ENCODE measurements at regions of chr22 and their contacts with region 1.

Region 1: DNA sequence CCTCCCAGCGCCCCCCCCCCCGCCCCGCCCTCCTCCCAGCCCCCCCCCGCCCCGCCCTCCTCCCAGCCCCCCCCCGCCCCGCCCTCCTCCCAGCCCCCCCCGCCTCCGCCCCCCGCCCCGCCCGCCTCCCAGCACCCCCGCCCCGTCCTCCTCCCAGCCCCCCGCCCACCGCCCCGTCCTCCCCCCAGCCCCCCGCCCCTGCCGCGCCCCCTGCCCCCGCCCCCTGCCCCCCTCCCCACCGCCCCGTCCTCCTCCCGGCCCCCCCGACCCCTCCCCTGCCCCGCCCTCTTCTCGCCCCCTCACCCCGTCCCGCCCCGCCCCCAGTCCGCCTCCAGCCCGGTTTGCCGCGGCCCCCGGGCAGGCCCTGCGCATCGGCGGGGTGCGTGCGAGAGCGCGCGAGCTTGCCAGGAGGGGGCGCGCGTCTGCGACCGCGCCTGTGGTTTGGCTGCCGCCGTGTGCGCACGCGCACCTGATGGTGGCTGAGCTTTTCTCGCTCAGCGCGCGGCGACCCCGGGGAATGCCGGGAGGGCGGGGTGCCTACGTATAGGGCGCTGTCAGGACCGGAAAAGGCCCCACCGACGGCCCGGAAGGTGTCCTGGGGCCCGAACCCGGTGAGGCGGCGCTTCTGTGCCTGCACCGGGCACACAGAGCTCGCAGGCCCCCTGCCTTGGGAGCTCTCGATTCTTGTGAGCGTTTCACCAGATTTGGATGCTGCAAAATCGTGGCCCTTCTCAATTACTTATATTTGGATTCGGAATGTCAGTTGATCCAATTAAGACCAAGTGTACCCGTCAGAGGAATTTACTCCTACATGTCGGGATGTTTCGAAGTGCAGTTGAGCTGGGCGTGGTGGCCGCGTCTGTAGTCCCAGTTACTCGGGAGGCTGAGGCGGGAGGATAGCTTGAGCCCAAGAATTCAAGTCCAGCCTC is 501 bp upstream of the TTLL12 start:
- DNase-seq: peak; percentile 93 to 98
- ATAC-seq: peak; percentile 93 to 96 (median 95)
- H3K4me3 ChIP-seq: peak overlapping the region; percentile 27 to 88 (median 61)
- H3K27ac ChIP-seq: peak overlapping the region; percentile 70 to 97 (median 88)
- H3K4me1 ChIP-seq: peaks cover 2 to 34% (median 18%) of the 10 kb centered on the region in 9 donors
- H3K27me3 ChIP-seq: no peaks in the 10 kb centered on the region
- CTCF ChIP-seq: peak; percentile 71 to 91 (median 76)

Region 2: DNA sequence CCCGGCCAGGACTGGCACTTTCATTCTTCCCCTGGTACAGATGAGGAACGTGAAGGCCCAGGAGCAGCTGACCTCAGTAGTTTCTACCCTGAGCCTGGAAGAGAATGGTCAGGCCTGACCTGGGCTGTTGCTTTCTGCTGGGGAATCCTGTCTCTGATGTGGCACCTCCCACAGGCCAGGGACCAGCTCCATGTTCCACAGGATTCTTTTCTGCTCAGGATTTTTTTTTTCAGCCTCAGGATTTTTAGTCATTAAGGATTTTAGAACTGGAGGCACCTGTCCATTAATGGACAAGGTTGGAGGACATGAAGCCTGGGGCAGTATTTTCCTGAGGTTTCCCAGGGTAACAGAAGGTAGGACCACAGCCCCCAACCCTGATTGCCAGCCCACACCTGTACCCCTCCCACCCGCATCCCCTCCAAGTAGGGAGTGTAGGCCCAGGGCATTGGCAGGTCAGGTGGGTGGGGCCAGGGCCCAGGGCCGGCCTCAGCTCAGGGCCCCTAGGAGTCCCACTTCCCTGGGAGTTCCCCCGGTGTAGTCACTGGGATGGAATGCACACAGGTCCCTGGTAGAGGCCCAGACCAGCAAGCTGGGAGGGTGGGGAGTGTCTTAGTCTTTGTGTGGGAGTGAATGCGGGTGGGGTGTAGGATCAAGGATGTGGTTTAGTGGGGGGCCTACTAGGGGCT is 60.8 kb before region 1 on chr22:
- intact Hi-C with region 1: no loop called
- DNase-seq: no peak
- ATAC-seq: peak in 2 of 8 donors; percentile 20 to 23
- H3K4me3 ChIP-seq: no peak overlapping the region
- H3K27ac ChIP-seq: no peak overlapping the region
- H3K4me1 ChIP-seq: peaks cover 0 to 40% (median 8%) of the 10 kb centered on the region in 9 donors
- H3K27me3 ChIP-seq: no peaks in the 10 kb centered on the region
- CTCF ChIP-seq: no peak

Region 3: GRCh38 chr22:43222262-43222661 is 34.8 kb after region 1 on chr22:
- intact Hi-C with region 1: loop called in 1 of 10 experiments (anchors 5 kb)
- DNase-seq: peak; percentile 60 to 76
- ATAC-seq: peak; percentile 83 to 94 (median 91)
- H3K4me3 ChIP-seq: peak overlapping the region in 1 of 10 donors; percentile 33
- H3K27ac ChIP-seq: peak overlapping the region in 5 of 10 donors; percentile 6 to 73 (median 35)
- H3K4me1 ChIP-seq: peaks cover 6 to 21% (median 18%) of the 10 kb centered on the region in 9 donors
- H3K27me3 ChIP-seq: peaks cover 0 to 6% (median 0%) of the 10 kb centered on the region in 7 donors
- CTCF ChIP-seq: no peak

Region 4: GRCh38 chr22:43232445-43232844 is 45.0 kb after region 1 on chr22:
- intact Hi-C with region 1: no loop called
- DNase-seq: no peak
- ATAC-seq: no peak
- H3K4me3 ChIP-seq: no peak overlapping the region
- H3K27ac ChIP-seq: no peak overlapping the region
- H3K4me1 ChIP-seq: peaks cover 0 to 20% (median 8%) of the 10 kb centered on the region in 9 donors
- H3K27me3 ChIP-seq: peaks cover 0 to 37% (median 9%) of the 10 kb centered on the region in 7 donors
- CTCF ChIP-seq: no peak

Region 5: DNA sequence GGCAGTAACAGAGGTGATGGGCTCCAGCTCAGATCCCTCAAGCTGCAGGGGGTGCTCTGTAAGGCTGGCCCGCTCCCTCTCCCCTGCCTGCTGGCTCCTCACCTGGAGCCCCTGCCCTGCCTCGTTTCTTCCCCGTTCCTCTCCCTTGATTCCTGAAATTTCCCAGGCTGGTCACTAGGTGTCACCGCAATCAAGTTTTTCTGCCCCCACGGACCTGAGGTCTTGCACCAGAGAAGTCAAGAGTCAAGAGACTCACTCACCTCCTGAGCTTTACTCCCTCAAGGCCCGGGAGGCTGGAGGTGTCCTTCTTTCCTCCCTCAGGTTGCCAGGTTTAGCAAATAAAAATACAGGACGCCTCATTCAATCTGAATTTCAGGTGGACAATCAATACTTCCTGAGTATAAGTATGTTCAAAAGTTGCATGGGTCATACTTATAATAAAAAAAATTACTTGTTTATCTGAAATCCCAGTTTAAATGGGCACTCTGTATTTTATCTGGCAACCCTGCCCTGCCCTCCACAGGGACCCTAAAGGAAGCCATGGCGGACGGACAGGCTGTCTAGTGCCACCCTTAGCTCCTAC is 86.6 kb after region 1 on chr22:
- intact Hi-C with region 1: no loop called
- DNase-seq: peak in 1 of 2 donors; percentile 39
- ATAC-seq: peak; percentile 44 to 78 (median 63)
- H3K4me3 ChIP-seq: no peak overlapping the region
- H3K27ac ChIP-seq: no peak overlapping the region
- H3K4me1 ChIP-seq: no peaks in the 10 kb centered on the region
- H3K27me3 ChIP-seq: peaks cover 0 to 52% (median 4%) of the 10 kb centered on the region in 7 donors
- CTCF ChIP-seq: peak; percentile 34 to 79 (median 72)